ENCODE measurements at regions of chr7 and their contacts with region 1.

Region 1: DNA sequence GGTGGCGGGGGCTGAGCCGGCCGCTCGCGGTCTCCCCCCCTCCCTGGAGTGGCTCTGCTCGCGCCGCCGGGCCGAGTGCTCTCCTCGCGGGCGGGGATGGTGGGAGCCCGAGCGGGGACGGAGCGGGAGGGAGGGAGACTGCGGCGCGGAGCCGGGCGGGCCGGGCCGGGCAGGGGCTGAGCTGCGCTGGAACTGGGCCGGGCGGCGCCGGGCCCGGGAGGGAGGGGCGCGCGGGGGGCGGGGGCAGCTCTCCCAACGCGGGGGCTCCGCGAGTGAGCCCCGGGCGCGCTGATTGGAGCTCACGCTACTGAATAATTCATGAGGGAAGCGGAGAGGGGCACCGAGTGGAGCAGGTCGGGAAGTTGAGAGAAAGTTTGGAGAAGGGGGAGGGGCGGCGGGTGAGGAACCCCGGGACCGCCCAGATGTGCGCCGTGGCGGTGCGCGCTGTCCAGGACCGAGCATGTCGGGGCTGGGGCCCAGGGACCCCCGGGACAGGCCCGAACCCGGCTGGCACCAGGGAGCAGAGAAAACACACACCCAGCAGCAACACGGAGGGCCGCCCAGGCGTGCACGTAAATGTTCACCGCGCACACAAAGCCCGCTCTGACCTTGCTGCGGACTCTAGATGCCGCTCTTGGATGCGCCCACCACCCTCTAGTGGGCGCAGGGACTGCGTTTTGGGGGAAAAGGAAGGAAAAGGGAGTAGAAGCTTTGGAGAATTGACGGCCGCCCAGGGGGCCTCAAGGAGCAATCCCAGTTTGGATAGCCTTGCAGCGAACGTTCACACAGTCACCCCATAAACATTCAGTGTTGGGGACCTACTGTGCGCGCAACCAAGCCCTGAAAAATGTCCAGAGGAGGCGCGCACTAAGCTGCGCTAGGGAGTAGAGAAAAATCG is at the start of gene EPHB4:
- DNase-seq: peak; percentile 59
- H3K27ac ChIP-seq: peak within 1 kb of the TSS; percentile 92
- CTCF ChIP-seq: peak; percentile 65

Region 2: DNA sequence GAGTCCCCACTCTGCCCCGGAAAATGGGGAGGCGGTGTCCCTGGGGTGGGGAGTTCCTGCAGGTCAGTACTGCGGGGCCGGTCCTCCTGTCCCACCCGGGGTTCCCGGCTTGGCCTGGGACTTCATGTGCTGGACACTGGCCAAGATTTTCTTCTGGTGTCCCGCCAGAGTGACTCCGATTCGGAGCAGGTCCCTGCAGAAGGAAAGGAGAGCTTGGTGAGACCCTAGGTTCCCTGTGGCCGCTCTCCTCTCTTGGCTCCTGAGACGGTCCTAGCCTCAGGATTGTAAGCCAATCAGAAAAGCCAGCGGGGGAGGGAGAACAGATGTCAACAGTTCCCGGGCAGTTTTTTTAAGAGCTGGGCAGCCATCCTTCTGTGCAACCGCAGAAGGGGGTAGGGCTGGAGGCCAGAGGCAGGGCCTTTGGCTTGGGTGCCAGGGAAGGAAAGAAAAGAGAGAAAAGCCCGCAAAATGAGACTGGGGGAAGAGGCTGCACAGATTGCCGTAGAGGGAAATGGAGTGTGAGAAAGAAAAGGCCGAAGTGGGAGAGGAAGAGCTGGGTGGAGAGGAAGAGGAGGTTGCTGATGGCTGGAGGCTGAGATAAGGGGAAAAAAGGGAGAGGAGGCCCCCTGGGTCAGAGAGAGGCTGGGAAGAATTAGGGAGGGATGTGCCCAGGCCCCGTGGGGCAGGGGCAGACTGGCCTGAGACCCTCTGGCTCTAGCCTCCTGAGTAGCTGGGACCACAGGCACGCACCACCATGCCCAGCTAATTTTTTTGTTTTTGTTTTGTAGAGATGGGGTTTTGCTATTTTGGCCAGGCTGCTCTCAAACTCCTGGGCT is 24.0 kb before region 1 on chr7:
- CTCF ChIA-PET with region 1: interaction called, 12 read pairs
- POLR2A ChIA-PET with region 1: interaction called, 14 read pairs
- DNase-seq: peak; percentile 96
- H3K27ac ChIP-seq: peak overlapping the region; percentile 99
- CTCF ChIP-seq: no peak

Region 3: DNA sequence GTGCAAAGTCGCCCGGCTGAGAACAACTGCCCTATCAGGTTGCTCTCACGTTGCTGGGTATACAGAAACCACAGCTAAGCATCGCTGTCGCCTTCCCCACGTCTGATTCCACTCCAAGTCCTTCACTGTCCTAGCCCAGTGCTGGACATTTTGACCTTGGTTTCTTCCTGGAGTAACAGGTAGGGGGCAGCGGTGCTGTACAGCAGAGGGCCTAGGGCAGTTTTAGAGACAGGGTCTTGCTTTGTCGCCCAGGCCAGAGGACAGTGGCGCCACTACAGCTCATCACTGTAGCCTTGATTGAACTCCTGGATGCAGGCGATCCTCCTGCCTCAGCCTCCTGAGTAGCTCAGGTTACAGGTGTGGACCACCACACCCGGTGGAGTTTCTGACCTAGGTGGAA is 407.5 kb after region 1 on chr7:
- CTCF ChIA-PET with region 1: no interaction called
- POLR2A ChIA-PET with region 1: no interaction called
- DNase-seq: no peak
- H3K27ac ChIP-seq: peak overlapping the region; percentile 24; the same call in 1 of the 2 replicates
- CTCF ChIP-seq: 0 out of 2 replicates have a peak, but pooled peaks have one; percentile 11